A549 (cell line): ENCODE measurements at regions of chr3 and their contacts with region 1.

Region 1: GRCh38 chr3:141412087-141412935 is 44.0 kb downstream of the ZBTB38 start:
- DNase-seq: peak; percentile 58 to 91
- ATAC-seq: peak; percentile 49 to 51
- H3K4me3 ChIP-seq: peak overlapping the region; percentile 22; the same call in 1 of the 3 replicates
- H3K27ac ChIP-seq: peak overlapping the region; percentile 99 to 100
- H3K4me1 ChIP-seq: peaks cover 99% of the 10 kb centered on the region
- CTCF ChIP-seq: no peak
- EP300 ChIP-seq: peak in 1 of 2 experiments; percentile 21; a peak in 1 of 5 replicates
- POLR2A ChIP-seq: no peak
- RAD21 ChIP-seq: no peak

Region 2: DNA sequence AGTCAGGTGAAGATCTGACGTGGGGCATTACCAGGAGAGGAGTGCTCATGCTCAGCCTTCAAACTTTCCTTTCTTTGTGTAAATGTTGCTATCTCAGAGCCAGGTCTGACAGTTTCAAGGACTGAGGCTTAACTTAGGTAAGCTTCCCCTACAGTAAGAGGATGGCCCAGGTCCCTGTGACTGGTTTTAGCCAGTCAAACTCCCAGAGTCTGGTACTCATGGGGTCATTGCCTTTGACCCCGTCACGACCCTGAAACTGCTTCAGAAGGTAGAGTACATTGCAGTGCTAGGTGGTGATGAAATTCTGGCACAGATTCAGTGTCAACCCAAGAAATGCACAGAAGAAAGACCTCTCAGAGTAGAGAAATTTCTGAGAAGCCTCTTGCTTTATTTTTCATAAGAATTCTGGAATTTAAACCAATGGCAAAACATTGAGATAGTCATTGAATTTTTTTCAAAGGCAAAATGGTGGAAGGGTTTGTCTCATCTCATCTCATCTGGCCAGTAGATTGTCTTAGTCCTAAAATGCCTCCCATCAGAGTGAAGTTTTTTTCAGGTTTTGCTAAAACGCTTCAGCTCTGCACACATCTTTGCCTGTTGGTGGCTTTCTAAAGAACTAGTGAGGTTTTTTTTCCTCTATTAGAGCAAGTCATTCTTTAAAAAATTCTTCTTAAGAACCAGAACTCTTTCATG is 20.9 kb before region 1 on chr3:
- CTCF ChIA-PET with region 1: no interaction called
- POLR2A ChIA-PET with region 1: no interaction called
- DNase-seq: no peak
- ATAC-seq: no peak
- H3K4me3 ChIP-seq: no peak overlapping the region
- H3K27ac ChIP-seq: peak overlapping the region; percentile 30 to 74; a peak in 5 of 6 replicates
- H3K4me1 ChIP-seq: peaks cover 60% of the 10 kb centered on the region
- CTCF ChIP-seq: no peak
- EP300 ChIP-seq: no peak
- POLR2A ChIP-seq: no peak
- RAD21 ChIP-seq: no peak

Region 3: GRCh38 chr3:141487521-141488252 is 75.4 kb after region 1 on chr3:
- CTCF ChIA-PET with region 1: no interaction called
- POLR2A ChIA-PET with region 1: no interaction called
- DNase-seq: peak; percentile 54 to 82
- ATAC-seq: peak; percentile 72 to 81
- H3K4me3 ChIP-seq: peak overlapping the region; percentile 76
- H3K27ac ChIP-seq: peak overlapping the region; percentile 90 to 96
- H3K4me1 ChIP-seq: peaks cover 51% of the 10 kb centered on the region
- CTCF ChIP-seq: no peak
- EP300 ChIP-seq: no peak
- POLR2A ChIP-seq: peak; percentile 31
- RAD21 ChIP-seq: no peak

Region 4: DNA sequence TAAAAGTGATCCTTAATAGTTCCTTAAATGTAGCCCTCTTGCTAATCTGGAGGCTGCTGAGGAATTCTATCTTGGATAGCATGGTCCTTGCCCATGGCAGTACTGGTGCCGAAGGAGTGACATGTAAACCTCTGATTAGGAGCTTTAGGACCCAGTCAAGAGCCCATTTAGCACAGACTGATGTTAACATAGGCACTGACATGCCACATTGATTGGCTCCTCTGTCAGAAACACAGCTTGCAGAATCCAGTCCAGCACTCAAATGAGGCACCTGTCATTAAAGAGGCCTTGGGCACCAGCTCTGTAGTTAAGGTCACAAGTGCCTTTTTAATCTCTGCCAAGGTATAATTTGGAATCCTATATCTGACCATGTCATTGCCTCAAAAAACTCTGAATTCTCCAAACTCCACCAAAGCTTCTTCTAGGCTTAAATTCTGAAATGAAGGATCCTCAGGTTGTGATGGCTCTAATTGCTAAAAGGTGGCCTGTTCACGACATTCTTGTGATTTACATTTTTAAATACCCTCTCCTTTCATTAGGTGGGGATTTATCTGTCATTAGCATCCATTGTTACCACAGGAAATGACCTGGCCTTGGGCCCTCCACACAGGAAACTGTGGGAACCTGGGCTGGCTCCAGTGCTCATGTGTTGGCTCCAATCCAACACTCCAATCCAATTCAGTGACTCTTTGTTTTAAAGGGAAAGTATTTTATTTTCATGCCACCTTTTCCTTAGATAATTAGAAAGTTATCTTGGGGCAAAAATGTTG is 268.5 kb after region 1 on chr3:
- CTCF ChIA-PET with region 1: no interaction called
- POLR2A ChIA-PET with region 1: interaction called, 10 read pairs
- DNase-seq: no peak
- ATAC-seq: no peak
- H3K4me3 ChIP-seq: no peak overlapping the region
- H3K27ac ChIP-seq: no peak overlapping the region
- H3K4me1 ChIP-seq: no peaks in the 10 kb centered on the region
- CTCF ChIP-seq: no peak
- EP300 ChIP-seq: no peak
- POLR2A ChIP-seq: no peak
- RAD21 ChIP-seq: no peak